ENCODE measurements at regions of chr4 and their contacts with region 1.

Region 1: DNA sequence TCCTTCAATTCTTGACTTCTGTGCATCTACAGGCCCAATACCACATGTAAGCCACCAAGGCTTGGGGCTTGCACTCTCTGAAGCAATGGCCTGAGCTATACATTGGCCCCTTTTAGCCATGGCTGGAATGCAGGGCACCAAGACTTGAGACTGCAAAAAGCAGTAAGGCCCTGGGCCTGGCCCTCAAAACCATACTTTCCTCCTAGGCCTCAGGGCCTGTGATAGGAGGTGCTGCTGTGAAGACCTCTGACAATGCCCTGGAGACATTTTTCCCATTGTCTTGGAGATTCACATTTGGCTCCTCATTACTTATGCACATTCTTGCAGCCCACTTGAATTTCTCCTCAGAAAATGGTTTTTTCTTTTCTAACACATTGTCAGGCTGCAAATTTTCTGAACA is 68.5 kb upstream of the FSTL5 start:
- DNase-seq: no peak
- H3K4me3 ChIP-seq: no peak overlapping the region
- H3K27ac ChIP-seq: no peak overlapping the region
- H3K4me1 ChIP-seq: no peaks in the 10 kb centered on the region
- H3K27me3 ChIP-seq: no peaks in the 10 kb centered on the region
- CTCF ChIP-seq: no peak
- POLR2A ChIP-seq: no peak

Region 2: DNA sequence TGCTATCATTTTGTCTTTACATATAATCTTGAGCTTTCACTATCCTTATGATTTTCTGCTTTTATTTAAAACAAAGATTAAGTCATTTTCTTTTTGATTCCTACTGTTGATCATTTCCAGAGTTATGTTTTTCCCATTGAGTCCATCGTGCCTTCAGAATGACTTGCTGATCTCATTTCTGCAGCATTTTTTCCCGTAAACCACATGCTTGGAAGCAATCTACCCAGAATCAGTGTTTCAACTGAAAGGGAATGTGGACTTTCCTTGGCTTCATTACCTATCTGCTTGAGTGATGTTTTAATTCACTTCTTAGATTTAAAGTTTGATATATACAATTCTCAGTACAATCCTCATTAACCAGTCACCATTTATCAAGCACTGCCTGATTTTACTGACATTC is 123.8 kb after region 1 on chr4:
- intact Hi-C with region 1: loop called (anchors 2 kb)
- DNase-seq: no peak
- H3K4me3 ChIP-seq: no peak overlapping the region
- H3K27ac ChIP-seq: no peak overlapping the region
- H3K4me1 ChIP-seq: no peaks in the 10 kb centered on the region
- H3K27me3 ChIP-seq: no peaks in the 10 kb centered on the region
- CTCF ChIP-seq: no peak
- POLR2A ChIP-seq: no peak

Region 3: DNA sequence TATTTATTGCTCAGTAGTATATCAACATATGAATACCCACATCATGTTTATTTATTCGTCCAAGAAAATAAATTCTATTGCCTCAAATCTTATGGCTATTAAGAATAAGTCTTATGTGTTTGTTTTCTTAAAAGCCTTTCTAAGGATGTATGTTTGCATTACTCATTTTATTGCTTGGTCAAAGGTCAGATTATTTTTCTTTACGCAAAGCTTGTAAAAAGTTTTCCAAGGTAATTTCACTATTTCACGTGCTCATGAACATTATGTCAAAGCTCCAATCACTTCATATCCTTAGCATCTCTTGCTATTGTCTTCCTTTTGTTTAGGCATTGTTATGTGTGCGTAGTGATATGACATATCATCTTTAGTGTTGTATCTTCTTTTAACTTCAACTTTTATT is 190.0 kb after region 1 on chr4:
- intact Hi-C with region 1: no loop called
- DNase-seq: no peak
- H3K4me3 ChIP-seq: no peak overlapping the region
- H3K27ac ChIP-seq: no peak overlapping the region
- H3K4me1 ChIP-seq: no peaks in the 10 kb centered on the region
- H3K27me3 ChIP-seq: no peaks in the 10 kb centered on the region
- CTCF ChIP-seq: no peak
- POLR2A ChIP-seq: no peak

Region 4: GRCh38 chr4:163042306-163042705 is 810.0 kb after region 1 on chr4:
- intact Hi-C with region 1: no loop called
- DNase-seq: no peak
- H3K4me3 ChIP-seq: no peak overlapping the region
- H3K27ac ChIP-seq: no peak overlapping the region
- H3K4me1 ChIP-seq: no peaks in the 10 kb centered on the region
- H3K27me3 ChIP-seq: no peaks in the 10 kb centered on the region
- CTCF ChIP-seq: no peak
- POLR2A ChIP-seq: no peak